ENCODE measurements at regions of chr1 and their contacts with region 1.

Region 1: GRCh38 chr1:223748773-223749733 is 36.7 kb downstream of the CAPN2 start:
- DNase-seq: peak; percentile 78
- CTCF ChIP-seq: peak; percentile 81

Region 2: DNA sequence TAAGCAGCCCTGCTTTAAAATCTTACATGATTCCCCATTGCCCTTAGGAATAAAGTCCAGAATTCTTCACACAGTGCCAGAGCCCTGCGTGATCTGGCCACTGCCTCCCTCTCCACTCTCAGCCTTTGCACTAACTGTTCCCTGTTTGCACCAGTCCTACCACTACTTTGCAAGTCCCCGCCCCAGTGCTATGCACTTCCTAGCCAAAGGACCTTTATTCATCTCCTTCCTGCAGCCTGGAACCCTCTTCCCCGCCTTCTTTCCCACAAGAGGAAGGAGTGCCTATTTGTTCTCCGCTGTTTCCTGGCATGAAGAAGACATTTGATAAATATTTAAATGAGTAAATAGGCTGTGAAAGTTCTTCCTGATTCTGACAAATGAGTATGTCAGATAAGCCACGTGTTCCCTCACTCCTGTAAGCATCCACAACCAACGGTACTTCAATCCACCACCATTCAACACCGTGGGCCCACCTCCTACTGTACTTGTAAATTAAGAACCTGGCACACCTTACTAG is 107.5 kb before region 1 on chr1:
- CTCF ChIA-PET with region 1: no interaction called
- POLR2A ChIA-PET with region 1: no interaction called
- DNase-seq: no peak
- CTCF ChIP-seq: no peak

Region 3: GRCh38 chr1:223700942-223701637 is 48.0 kb before region 1 on chr1:
- CTCF ChIA-PET with region 1: interaction called, 27 read pairs
- POLR2A ChIA-PET with region 1: no interaction called
- DNase-seq: no peak
- CTCF ChIP-seq: no peak

Region 4: DNA sequence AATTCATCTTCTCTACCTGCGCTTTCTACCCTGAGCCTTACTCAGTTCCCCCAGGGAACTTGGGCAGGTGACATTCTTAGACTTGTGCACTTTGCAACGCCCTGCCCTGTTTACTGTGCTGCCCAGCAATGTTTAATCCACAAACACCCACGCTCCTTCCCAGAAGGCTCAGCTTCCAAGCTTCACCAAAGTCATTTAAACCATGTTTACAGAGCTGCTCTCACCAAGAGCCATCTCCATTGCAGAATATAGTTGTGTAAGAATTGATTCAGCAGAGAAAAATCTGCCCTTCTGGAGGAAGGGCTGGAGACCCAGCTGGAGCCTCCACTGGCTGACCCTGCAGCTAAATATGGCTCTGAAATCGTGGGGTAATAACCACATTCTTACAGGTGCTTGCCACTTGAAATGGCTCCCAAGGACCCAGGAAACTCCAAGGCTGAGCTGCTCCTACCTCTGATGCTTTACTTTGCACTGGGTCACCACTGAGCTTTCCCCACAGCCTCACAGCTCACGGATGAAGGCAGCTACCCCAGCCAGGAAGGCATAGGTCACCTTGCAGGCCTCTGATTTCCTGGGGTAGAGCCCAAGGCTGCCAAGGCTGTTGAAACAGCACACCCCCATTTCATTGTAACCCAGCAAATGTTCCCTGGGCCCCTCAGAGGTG is 28.0 kb before region 1 on chr1:
- CTCF ChIA-PET with region 1: interaction called, 17 read pairs
- POLR2A ChIA-PET with region 1: no interaction called
- DNase-seq: no peak
- CTCF ChIP-seq: no peak

Region 5: DNA sequence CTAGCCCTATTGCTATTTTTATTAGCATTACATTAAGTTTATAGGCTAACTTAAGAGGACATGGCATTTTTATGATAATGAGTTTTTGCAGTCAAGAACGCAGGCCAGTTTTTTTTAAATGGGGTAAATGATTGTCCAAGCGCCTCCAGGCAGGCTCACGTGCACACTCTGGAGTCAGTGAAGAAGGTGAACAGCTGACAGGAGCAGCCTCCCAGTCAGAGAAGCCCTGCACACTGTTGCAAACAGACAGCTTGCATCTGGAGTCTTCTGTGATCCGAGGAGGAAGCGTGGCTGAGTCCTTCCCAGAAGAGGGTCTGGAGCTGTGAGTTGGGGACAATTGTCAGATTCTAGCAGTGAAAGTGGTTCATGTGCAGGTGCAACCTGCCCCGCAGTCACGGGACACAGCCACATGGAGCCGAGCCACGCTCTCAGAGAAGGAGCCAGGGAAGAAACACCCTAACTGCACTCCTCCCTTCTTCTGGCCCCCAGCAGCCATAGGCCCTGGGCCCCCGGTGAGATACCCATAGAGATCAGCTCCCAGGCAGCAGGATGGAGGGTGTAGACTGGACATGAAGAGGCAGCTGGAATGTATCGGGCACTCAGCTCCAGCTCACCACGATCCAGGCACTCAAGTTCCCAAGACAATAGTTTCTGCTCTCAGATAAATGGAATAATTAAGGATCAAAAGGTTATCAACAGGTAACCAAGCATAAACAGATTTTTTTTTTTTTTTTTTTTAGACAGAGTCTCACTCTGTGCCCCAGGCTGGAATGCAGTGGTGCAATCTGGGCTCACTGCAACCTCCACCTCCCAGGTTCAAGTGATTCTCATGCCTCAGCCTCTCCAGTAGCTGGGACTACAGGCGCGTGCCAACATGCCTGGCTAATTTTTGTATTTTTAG is 10.3 kb before region 1 on chr1:
- CTCF ChIA-PET with region 1: interaction called, 68 read pairs
- POLR2A ChIA-PET with region 1: no interaction called
- DNase-seq: no peak
- CTCF ChIP-seq: no peak

Region 6: GRCh38 chr1:223771814-223772770 is 23.0 kb after region 1 on chr1:
- CTCF ChIA-PET with region 1: interaction called, 19 read pairs
- POLR2A ChIA-PET with region 1: no interaction called
- DNase-seq: no peak
- CTCF ChIP-seq: no peak

Region 7: GRCh38 chr1:223794136-223794880 is 45.3 kb after region 1 on chr1:
- CTCF ChIA-PET with region 1: no interaction called
- POLR2A ChIA-PET with region 1: no interaction called
- DNase-seq: no peak
- CTCF ChIP-seq: no peak

Region 8: GRCh38 chr1:223827193-223827663 is 78.2 kb after region 1 on chr1:
- CTCF ChIA-PET with region 1: no interaction called
- POLR2A ChIA-PET with region 1: no interaction called
- DNase-seq: no peak
- CTCF ChIP-seq: no peak

Measured in GM10248 (cell line).